Mucosa of descending colon (tissue), 3 donors: ENCODE measurements at regions of chr5 and their contacts with region 1.

Region 1: GRCh38 chr5:43348207-43348606 is 35.0 kb upstream of the HMGCS1 start:
- DNase-seq: no peak
- ATAC-seq: no peak
- H3K4me3 ChIP-seq: no peak overlapping the region
- H3K4me1 ChIP-seq: no peaks in the 10 kb centered on the region
- CTCF ChIP-seq: no peak

Region 2: DNA sequence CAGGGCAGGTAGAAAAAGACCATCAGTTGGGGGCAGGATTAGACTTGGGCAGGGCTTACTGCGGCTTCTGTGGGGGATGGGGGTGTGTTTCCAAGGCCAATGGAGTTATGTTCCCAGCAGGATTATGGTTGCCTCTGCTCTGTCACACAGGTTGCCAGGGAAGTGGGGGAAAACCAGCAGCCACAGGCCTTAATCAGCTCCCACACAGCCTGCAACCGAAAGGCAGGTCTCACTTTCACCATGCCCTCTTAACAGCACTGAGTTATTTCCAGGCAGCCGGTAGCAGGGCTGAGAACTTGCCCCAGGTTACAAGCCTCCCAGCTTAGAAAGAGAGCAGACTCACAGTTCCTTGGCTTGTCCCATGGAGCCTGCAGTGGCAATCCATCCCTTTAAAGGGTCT is 835.5 kb after region 1 on chr5:
- intact Hi-C with region 1: loop called in 1 of 2 experiments (anchors 10 kb)
- DNase-seq: no peak
- ATAC-seq: no peak
- H3K4me3 ChIP-seq: no peak overlapping the region
- H3K4me1 ChIP-seq: no peaks in the 10 kb centered on the region
- CTCF ChIP-seq: no peak